ENCODE measurements at regions of chr1 and their contacts with region 1.

Region 1: DNA sequence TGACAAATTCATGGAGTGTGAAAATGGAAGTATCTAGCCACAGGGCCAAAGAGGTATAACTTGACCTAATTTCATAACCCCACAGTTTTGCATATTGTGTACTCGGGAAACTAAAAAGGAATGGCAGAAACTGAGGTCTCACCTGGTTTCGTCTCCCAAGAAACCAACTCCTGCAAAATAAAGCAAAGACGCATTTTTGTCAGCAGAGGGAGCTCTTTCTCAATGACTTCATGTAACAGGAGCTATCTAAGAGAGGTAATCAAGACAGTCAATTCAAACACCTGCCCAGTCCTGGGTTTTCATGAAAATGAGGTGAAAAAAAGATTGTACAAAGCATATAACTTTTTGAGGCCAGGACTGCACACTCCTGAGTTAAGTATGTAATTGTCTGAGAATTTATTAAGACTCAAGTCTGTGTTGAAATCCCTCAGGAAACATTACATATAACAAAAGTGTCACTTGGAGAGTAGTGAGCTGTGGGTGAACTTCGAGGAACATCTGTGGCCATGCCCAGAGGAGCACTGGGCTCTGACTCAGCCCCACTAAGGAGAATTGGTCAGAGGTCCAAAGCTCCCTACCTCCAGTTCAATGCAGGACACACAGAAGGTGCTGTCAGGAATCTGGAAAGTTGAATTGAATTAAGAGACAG is 17.6 kb downstream of the FCRL4 start:
- DNase-seq: peak; percentile 56 to 65 (median 62)
- ATAC-seq: peak; percentile 84
- H3K4me3 ChIP-seq: no peak overlapping the region
- H3K27ac ChIP-seq: no peak overlapping the region
- H3K4me1 ChIP-seq: no peaks in the 10 kb centered on the region
- H3K27me3 ChIP-seq: peaks cover 0 to 5% of the 10 kb centered on the region in 2 experiments; a peak in 2 of 5 replicates
- CTCF ChIP-seq: peak; percentile 58 to 80 (median 69)
- EP300 ChIP-seq: no peak
- POLR2A ChIP-seq: no peak
- RAD21 ChIP-seq: peak in 1 of 2 experiments; percentile 67

Region 2: GRCh38 chr1:157438146-157438545 is 142.2 kb before region 1 on chr1:
- CTCF ChIA-PET with region 1: no interaction called
- POLR2A ChIA-PET with region 1: no interaction called
- in situ Hi-C with region 1: no loop called
- intact Hi-C with region 1: no loop called
- DNase-seq: no peak
- ATAC-seq: no peak
- H3K4me3 ChIP-seq: no peak overlapping the region
- H3K27ac ChIP-seq: no peak overlapping the region
- H3K4me1 ChIP-seq: no peaks in the 10 kb centered on the region
- H3K27me3 ChIP-seq: peaks cover 8 to 25% of the 10 kb centered on the region in 2 experiments
- CTCF ChIP-seq: no peak
- EP300 ChIP-seq: no peak
- POLR2A ChIP-seq: no peak
- RAD21 ChIP-seq: no peak

Region 3: DNA sequence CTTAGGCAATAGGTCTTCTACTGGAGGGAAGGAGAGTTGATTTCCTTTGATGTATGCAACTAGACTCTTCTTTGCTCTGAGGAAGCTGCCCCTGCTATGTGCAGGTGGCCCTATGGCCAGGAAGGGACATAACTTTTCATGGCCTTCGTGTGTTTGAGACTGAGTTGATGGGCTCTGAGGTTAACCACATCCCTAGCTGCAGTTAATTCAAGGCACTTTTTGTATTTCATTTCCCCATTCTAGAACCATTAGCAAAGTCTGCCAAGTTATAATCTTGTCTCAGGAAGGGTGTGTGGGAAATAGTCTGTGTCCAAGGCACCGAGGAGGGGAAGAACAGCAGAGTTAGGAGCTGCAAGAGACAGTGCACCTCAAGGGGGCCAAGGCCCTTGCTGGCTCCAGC is 15.1 kb after region 1 on chr1:
- CTCF ChIA-PET with region 1: no interaction called
- POLR2A ChIA-PET with region 1: no interaction called
- in situ Hi-C with region 1: no loop called
- intact Hi-C with region 1: no loop called
- DNase-seq: no peak
- ATAC-seq: no peak
- H3K4me3 ChIP-seq: no peak overlapping the region
- H3K27ac ChIP-seq: no peak overlapping the region
- H3K4me1 ChIP-seq: no peaks in the 10 kb centered on the region
- H3K27me3 ChIP-seq: no peaks in the 10 kb centered on the region
- CTCF ChIP-seq: no peak
- EP300 ChIP-seq: no peak
- POLR2A ChIP-seq: no peak
- RAD21 ChIP-seq: no peak

Region 4: GRCh38 chr1:157626099-157626498 is 45.8 kb after region 1 on chr1:
- CTCF ChIA-PET with region 1: no interaction called
- POLR2A ChIA-PET with region 1: interaction called, 3 read pairs
- in situ Hi-C with region 1: no loop called
- intact Hi-C with region 1: loop called (anchors 1 kb)
- DNase-seq: peak; percentile 16 to 57 (median 30)
- ATAC-seq: peak; percentile 86
- H3K4me3 ChIP-seq: no peak overlapping the region
- H3K27ac ChIP-seq: no peak overlapping the region
- H3K4me1 ChIP-seq: no peaks in the 10 kb centered on the region
- H3K27me3 ChIP-seq: peaks cover 0 to 5% of the 10 kb centered on the region in 2 experiments; a peak in 1 of 5 replicates
- CTCF ChIP-seq: peak; percentile 60 to 69 (median 63)
- EP300 ChIP-seq: no peak
- POLR2A ChIP-seq: no peak
- RAD21 ChIP-seq: peak in 1 of 2 experiments; percentile 45; a peak in 2 of 4 replicates

Region 5: GRCh38 chr1:157691285-157691920 is 111.1 kb after region 1 on chr1:
- CTCF ChIA-PET with region 1: no interaction called
- POLR2A ChIA-PET with region 1: no interaction called
- in situ Hi-C with region 1: no loop called
- intact Hi-C with region 1: loop called (anchors 10 kb)
- DNase-seq: peak; percentile 13 to 33 (median 18)
- ATAC-seq: peak; percentile 72
- H3K4me3 ChIP-seq: no peak overlapping the region
- H3K27ac ChIP-seq: no peak overlapping the region
- H3K4me1 ChIP-seq: no peaks in the 10 kb centered on the region
- H3K27me3 ChIP-seq: no peaks in the 10 kb centered on the region
- CTCF ChIP-seq: peak; percentile 33 to 58 (median 53); a peak in 5 of 6 replicates
- EP300 ChIP-seq: no peak
- POLR2A ChIP-seq: no peak
- RAD21 ChIP-seq: peak in 1 of 2 experiments; percentile 53; a peak in 3 of 4 replicates